Gastrocnemius medialis (tissue), 4 donors: ENCODE measurements at regions of chr13 and their contacts with region 1.

Region 1: DNA sequence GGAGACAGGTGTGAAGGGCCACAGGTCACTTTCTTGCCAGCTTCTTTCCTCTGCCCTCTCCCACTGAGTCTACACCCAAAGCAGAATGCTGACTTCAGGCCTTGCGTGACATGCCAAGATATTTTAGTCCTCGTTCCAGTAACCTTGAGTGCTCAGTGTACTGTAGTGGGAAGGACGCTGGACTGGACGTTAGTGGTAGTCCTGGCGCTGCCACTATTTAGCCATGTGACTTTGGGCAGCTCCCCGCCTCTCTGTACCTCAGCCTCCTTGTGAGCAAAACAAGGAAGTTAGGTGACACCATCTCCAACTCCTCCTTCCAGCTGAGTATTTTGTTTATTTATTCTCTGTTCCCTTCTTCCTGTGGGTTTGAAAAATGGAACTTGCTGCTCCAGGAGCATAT is 86.1 kb downstream of the FRY start:
- DNase-seq: peak; percentile 80 to 91
- ATAC-seq: peak; percentile 99
- H3K4me3 ChIP-seq: peak overlapping the region in 1 of 4 donors; percentile 14
- H3K27ac ChIP-seq: peak overlapping the region; percentile 76 to 82 (median 80)
- H3K4me1 ChIP-seq: peaks cover 9 to 42% of the 10 kb centered on the region in 2 donors
- H3K27me3 ChIP-seq: no peaks in the 10 kb centered on the region
- CTCF ChIP-seq: no peak
- POLR2A ChIP-seq: peak in 1 of 2 donors; percentile 29

Region 2: GRCh38 chr13:32060401-32060878 is 57.3 kb before region 1 on chr13:
- in situ Hi-C with region 1: no loop called
- intact Hi-C with region 1: loop called (anchors 2 kb)
- DNase-seq: peak; percentile 7 to 46
- ATAC-seq: peak; percentile 96
- H3K4me3 ChIP-seq: peak overlapping the region; percentile 11 to 48 (median 34)
- H3K27ac ChIP-seq: peak overlapping the region; percentile 79 to 90 (median 82)
- H3K4me1 ChIP-seq: peaks cover 55 to 56% of the 10 kb centered on the region in 2 donors
- H3K27me3 ChIP-seq: no peaks in the 10 kb centered on the region
- CTCF ChIP-seq: no peak
- POLR2A ChIP-seq: peak; percentile 19 to 33

Region 3: GRCh38 chr13:32205431-32206096 is 87.9 kb after region 1 on chr13:
- in situ Hi-C with region 1: no loop called
- intact Hi-C with region 1: no loop called
- DNase-seq: no peak
- ATAC-seq: no peak
- H3K4me3 ChIP-seq: no peak overlapping the region
- H3K27ac ChIP-seq: no peak overlapping the region
- H3K4me1 ChIP-seq: peaks cover 4 to 6% of the 10 kb centered on the region in 2 donors
- H3K27me3 ChIP-seq: no peaks in the 10 kb centered on the region
- CTCF ChIP-seq: no peak
- POLR2A ChIP-seq: no peak